Panc1 (cell line): ENCODE measurements at regions of chr11 and their contacts with region 1.

Region 1: DNA sequence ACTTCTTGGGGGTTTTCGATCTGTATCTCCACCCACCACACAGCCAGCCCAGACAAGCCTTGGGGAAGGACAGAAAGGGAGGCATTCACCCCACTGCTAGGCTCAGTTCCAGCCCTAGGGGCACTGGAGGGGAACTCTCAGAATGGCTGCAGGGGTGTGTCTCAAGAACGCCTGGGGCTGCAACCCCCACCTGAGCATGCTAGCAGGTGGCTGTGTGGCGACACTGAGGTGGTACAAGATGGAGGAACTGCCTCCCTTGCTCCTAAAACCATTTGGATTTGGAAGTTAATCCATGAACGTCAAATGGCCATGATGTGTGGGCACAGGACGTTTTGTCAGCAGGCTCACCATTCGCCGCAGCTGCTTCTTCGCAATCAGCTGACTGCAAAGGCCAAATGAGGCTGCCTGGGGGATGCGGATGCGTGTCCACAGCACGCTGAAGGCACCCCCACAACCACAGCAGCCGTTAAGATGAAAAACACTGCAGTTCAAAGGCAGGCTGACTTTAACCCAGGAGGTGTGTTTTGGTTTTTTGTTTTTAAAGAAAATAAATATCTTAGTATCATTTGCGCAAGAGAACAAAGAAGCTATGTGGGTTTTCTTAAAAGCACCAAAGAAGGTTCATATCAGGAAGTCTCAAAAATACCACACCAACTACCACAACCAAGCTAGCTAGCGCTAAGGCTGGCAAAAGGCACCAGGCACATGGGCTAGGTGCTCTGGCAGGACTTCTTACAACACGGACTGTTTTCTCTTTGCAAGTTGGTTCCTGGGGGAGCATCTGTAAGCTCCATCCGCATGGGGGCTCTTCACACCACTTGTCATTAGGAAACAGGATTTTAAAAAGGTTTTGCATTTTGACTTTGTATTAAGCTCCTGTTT is 22.2 kb upstream of the NAP1L4 start:
- DNase-seq: no peak
- ATAC-seq: no peak
- H3K4me3 ChIP-seq: no peak overlapping the region
- H3K27ac ChIP-seq: no peak overlapping the region
- H3K4me1 ChIP-seq: no peaks in the 10 kb centered on the region
- H3K27me3 ChIP-seq: no peaks in the 10 kb centered on the region
- CTCF ChIP-seq: no peak

Region 2: DNA sequence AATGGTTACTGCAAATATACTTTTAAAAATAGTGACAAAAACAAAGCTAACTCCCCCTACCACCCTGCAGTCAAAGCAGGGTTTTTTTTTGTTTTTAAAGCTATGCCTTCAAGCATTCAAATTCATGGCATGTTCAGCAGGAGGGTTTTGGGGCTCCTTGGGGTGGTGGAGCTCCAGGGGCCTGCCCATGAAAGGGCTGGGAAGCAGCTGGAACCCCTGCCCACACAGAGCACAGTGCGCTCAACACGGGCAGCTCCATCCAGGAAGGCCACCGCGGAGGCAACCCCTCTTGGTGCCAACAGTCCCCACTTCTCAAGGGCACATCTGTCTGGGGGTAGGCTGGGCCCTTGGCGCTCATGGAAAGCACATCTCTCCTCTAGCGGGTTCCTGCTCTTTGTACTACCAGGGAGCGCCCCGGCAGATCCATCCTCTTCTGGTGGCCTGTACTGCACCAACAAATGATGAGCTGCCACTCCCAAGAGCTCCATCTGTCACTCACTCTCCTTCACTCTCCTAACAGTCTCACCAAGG is 68.5 kb before region 1 on chr11:
- CTCF ChIA-PET with region 1: no interaction called
- POLR2A ChIA-PET with region 1: interaction called, 21 read pairs
- in situ Hi-C with region 1: no loop called
- intact Hi-C with region 1: no loop called
- DNase-seq: no peak
- ATAC-seq: no peak
- H3K4me3 ChIP-seq: no peak overlapping the region
- H3K27ac ChIP-seq: no peak overlapping the region
- H3K4me1 ChIP-seq: peaks cover 18% of the 10 kb centered on the region
- H3K27me3 ChIP-seq: no peaks in the 10 kb centered on the region
- CTCF ChIP-seq: no peak

Region 3: GRCh38 chr11:3085052-3085451 is 70.8 kb after region 1 on chr11:
- CTCF ChIA-PET with region 1: interaction called, 13 read pairs
- POLR2A ChIA-PET with region 1: no interaction called
- in situ Hi-C with region 1: no loop called
- intact Hi-C with region 1: no loop called
- DNase-seq: no peak
- ATAC-seq: no peak
- H3K4me3 ChIP-seq: no peak overlapping the region
- H3K27ac ChIP-seq: no peak overlapping the region
- H3K4me1 ChIP-seq: peaks cover 6% of the 10 kb centered on the region; the same call in 1 of the 2 replicates
- H3K27me3 ChIP-seq: no peaks in the 10 kb centered on the region
- CTCF ChIP-seq: no peak